B cell (primary cell): ENCODE measurements at regions of chr7 and their contacts with region 1.

Region 1: DNA sequence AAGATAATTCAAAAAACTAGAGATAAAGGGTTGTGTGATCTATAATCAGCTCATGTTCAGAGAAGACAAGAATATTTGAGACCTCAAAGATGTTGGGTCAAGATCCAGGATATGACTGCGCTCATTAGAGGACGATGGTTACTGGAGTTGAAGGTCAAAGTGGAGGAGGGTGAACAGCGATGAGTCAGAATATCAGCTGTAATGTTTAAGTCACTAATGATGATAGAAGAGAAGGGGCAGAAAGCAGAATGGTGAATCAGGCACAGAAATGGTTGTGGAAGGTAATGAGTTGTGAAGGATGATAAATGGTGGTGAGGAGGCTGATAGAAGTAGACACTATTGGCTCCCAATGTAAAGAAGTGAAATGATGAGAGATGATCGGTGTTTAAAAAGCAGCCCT is 540.3 kb downstream of the INHBA start:
- DNase-seq: no peak
- ATAC-seq: no peak
- H3K4me3 ChIP-seq: no peak overlapping the region
- H3K4me3 Mint-ChIP-seq: no peak overlapping the region
- H3K27ac ChIP-seq: no peak overlapping the region
- H3K27ac Mint-ChIP-seq: no peak overlapping the region
- H3K4me1 ChIP-seq: no peaks in the 10 kb centered on the region
- H3K4me1 Mint-ChIP-seq: no peaks in the 10 kb centered on the region
- H3K27me3 ChIP-seq: no peaks in the 10 kb centered on the region
- H3K27me3 Mint-ChIP-seq: no peaks in the 10 kb centered on the region
- CTCF ChIP-seq: no peak

Region 2: DNA sequence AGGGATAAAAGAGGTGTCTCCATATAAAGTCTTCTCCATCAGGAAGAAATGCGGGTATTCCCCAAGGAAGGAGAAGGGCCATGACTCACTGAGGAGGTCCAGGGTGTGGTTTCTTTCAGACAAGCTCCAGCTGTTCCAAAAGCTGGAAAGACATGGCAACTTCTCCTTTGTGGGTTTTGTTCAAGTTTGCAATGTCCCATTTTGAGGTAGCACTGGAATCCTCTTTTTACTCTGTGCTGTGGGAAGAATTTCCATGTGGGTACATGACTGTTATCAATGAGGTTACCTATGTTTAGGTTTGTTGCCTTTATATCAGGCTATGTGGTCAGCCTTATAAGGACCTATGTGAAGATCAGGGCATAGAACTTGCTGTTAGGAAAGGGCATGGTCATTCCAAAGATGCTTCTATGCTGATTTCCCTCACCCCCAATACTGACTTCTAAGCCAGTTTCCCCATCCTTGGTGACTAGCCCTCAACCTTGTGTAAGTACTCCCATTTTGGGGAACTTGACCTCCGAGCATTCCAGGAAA is 157.2 kb before region 1 on chr7:
- CTCF ChIA-PET with region 1: no interaction called
- POLR2A ChIA-PET with region 1: interaction called, 10 read pairs
- intact Hi-C with region 1: no loop called
- DNase-seq: no peak
- ATAC-seq: no peak
- H3K4me3 ChIP-seq: no peak overlapping the region
- H3K4me3 Mint-ChIP-seq: no peak overlapping the region
- H3K27ac ChIP-seq: no peak overlapping the region
- H3K27ac Mint-ChIP-seq: no peak overlapping the region
- H3K4me1 ChIP-seq: no peaks in the 10 kb centered on the region
- H3K4me1 Mint-ChIP-seq: no peaks in the 10 kb centered on the region
- H3K27me3 ChIP-seq: no peaks in the 10 kb centered on the region
- H3K27me3 Mint-ChIP-seq: no peaks in the 10 kb centered on the region
- CTCF ChIP-seq: no peak